CD14-positive monocyte (primary cell): ENCODE measurements at regions of chr16 and their contacts with region 1.

Region 1: DNA sequence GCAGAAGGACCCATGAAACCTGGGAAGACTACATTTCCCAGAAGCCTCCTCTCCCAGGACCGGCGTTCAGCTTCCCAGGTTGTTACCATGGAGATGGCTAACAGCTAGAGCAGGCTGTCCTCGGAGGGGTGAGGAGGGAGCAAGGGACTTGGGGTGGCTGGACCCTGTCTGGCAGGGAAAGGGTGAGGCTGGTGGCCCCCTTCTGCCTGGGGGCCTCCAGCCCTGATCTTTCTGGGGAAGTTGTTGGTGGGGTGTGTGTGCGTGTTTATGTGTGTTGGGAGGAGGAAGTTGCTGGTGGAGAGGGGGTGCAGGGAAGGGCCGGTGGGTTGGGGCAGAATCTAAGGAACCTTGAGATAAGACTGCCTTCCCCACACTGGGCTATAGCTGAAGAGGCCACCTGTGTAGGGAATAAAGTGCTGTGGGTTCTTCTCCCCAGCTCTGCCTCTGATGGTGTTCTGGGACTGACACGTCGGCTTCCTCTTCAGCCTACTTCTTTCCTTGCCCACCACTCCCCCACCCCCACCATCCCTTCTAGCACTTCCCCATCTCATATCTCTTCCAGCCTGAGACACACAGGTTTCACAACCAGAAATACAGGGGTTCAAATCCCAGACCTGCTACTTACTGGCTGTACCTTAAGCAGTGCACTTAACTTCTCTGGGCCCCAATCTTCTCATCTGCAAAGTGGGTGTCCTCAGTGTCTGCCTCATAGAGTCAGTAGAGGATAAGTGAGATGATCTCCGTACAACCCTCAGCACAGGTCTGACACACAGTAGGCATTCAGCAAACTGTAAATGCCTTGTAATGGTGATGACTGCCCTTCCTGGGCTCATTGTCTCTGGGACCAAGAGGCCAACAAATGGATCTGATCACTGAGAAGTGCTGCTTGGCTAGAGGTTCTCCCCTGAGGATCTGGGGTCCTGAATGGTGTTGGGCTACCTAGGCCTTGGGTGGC is at the start of gene DRC7:
- DNase-seq: peak; percentile 76 to 79 (median 76)
- H3K4me3 ChIP-seq: peak within 1 kb of the TSS; percentile 40 to 76 (median 49)
- H3K4me3 Mint-ChIP-seq: peak within 1 kb of the TSS; percentile 83 to 94
- H3K27ac ChIP-seq: peak within 1 kb of the TSS; percentile 73 to 85
- H3K27ac Mint-ChIP-seq: peak within 1 kb of the TSS; percentile 93 to 98 (median 97)
- H3K4me1 ChIP-seq: peaks cover 30 to 35% of the 10 kb centered on the region in 2 donors
- H3K4me1 Mint-ChIP-seq: peaks cover 32% of the 10 kb centered on the region
- H3K27me3 ChIP-seq: no peaks in the 10 kb centered on the region
- H3K27me3 Mint-ChIP-seq: peaks cover 1 to 2% (median 2%) of the 10 kb centered on the region in 3 donors
- CTCF ChIP-seq: no peak
- polyA plus RNA-seq, gene DRC7: 0.11 to 0.41 TPM in 2 of 3 donors, not detected in the other

Region 2: GRCh38 chr16:57648590-57649442 is 46.2 kb before region 1 on chr16:
- intact Hi-C with region 1: loop called (anchors 5 kb)
- DNase-seq: peak; percentile 82 to 86 (median 83)
- H3K4me3 ChIP-seq: no peak overlapping the region
- H3K4me3 Mint-ChIP-seq: no peak overlapping the region
- H3K27ac ChIP-seq: peak overlapping the region; percentile 48 to 58
- H3K27ac Mint-ChIP-seq: peak overlapping the region; percentile 26 to 93 (median 83)
- H3K4me1 ChIP-seq: peaks cover 24 to 25% of the 10 kb centered on the region in 2 donors
- H3K4me1 Mint-ChIP-seq: peaks cover 25% of the 10 kb centered on the region
- H3K27me3 ChIP-seq: peaks cover 2 to 34% of the 10 kb centered on the region in 2 donors
- H3K27me3 Mint-ChIP-seq: peaks cover 23 to 39% (median 32%) of the 10 kb centered on the region in 3 donors
- CTCF ChIP-seq: peak; percentile 100

Region 3: DNA sequence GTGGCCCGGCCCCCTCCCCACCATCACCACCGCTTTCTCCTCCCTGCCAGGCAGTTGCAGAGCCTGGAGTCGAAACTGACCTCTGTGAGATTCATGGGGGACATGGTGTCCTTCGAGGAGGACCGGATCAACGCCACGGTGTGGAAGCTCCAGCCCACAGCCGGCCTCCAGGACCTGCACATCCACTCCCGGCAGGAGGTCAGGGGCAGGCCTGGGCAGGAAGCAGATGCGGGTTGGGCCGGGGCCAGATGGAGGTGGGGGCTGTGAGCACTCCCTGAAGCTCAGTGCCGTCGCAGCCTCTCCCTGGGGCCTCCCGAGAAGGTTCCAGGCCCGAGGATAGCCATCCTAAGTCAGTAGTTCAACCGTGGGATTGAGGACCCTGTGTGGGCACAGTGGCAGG is 41.1 kb before region 1 on chr16:
- intact Hi-C with region 1: loop called (anchors 5 kb)
- DNase-seq: no peak
- H3K4me3 ChIP-seq: no peak overlapping the region
- H3K4me3 Mint-ChIP-seq: peak overlapping the region in 1 of 2 donors; percentile 42
- H3K27ac ChIP-seq: no peak overlapping the region
- H3K27ac Mint-ChIP-seq: no peak overlapping the region
- H3K4me1 ChIP-seq: peaks cover 4 to 5% of the 10 kb centered on the region in 2 donors
- H3K4me1 Mint-ChIP-seq: peaks cover 9% of the 10 kb centered on the region
- H3K27me3 ChIP-seq: peaks cover 0 to 8% of the 10 kb centered on the region in 2 donors
- H3K27me3 Mint-ChIP-seq: peaks cover 20 to 30% (median 24%) of the 10 kb centered on the region in 3 donors
- CTCF ChIP-seq: no peak

Region 4: DNA sequence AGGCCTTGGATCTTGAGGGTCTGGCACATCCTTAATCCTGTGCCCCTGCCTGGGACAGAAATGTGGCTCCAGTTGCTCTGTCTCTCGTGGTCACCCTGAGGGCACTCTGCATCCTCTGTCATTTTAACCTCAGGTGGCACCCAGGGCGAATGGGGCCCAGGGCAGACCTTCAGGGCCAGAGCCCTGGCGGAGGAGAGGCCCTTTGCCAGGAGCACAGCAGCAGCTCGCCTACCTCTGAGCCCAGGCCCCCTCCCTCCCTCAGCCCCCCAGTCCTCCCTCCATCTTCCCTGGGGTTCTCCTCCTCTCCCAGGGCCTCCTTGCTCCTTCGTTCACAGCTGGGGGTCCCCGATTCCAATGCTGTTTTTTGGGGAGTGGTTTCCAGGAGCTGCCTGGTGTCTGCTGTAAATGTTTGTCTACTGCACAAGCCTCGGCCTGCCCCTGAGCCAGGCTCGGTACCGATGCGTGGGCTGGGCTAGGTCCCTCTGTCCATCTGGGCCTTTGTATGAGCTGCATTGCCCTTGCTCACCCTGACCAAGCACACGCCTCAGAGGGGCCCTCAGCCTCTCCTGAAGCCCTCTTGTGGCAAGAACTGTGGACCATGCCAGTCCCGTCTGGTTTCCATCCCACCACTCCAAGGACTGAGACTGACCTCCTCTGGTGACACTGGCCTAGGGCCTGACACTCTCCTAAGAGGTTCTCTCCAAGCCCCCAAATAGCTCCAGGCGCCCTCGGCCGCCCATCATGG is 30.9 kb before region 1 on chr16:
- intact Hi-C with region 1: loop called in 1 of 2 experiments (anchors 5 kb)
- DNase-seq: no peak
- H3K4me3 ChIP-seq: no peak overlapping the region
- H3K4me3 Mint-ChIP-seq: no peak overlapping the region
- H3K27ac ChIP-seq: no peak overlapping the region
- H3K27ac Mint-ChIP-seq: peak overlapping the region in 6 of 7 donors; percentile 38 to 90 (median 70)
- H3K4me1 ChIP-seq: peaks cover 25 to 27% of the 10 kb centered on the region in 2 donors
- H3K4me1 Mint-ChIP-seq: peaks cover 38% of the 10 kb centered on the region
- H3K27me3 ChIP-seq: no peaks in the 10 kb centered on the region
- H3K27me3 Mint-ChIP-seq: peaks cover under 1 to 4% (median 3%) of the 10 kb centered on the region in 3 donors
- CTCF ChIP-seq: no peak

Region 5: GRCh38 chr16:57675741-57676584 is 19.0 kb before region 1 on chr16:
- intact Hi-C with region 1: no loop called
- DNase-seq: peak; percentile 55 to 78 (median 71)
- H3K4me3 ChIP-seq: no peak overlapping the region
- H3K4me3 Mint-ChIP-seq: peak overlapping the region in 1 of 2 donors; percentile 4
- H3K27ac ChIP-seq: no peak overlapping the region
- H3K27ac Mint-ChIP-seq: peak overlapping the region; percentile 10 to 71 (median 52)
- H3K4me1 ChIP-seq: peaks cover 31 to 49% of the 10 kb centered on the region in 2 donors
- H3K4me1 Mint-ChIP-seq: peaks cover 42% of the 10 kb centered on the region
- H3K27me3 ChIP-seq: no peaks in the 10 kb centered on the region
- H3K27me3 Mint-ChIP-seq: peaks cover 2 to 4% (median 4%) of the 10 kb centered on the region in 3 donors
- CTCF ChIP-seq: no peak

Region 6: DNA sequence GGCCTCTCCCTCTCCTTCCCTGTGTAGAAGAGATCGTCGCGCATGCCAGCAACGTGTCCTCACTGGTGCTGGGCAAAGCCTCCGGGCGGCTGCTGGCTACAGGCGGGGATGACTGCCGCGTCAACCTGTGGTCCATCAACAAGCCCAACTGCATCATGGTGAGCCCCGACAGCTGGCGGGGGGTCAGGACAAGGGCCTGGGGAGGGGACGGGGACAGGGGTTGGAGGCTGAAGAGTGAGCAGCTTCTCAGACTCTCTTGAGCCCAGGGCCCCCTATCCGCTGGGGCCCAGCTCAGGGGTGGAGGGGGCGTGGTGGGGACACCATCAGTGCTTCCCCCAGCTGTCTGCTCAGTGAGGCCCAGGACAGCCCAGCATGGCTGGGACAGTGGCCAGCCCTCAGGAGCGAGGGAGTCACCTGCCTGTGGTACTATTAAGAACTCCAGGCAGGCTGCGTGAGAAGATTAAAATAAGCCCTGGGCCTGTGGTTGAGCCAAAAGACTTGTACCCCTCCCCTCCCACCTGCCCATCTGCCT is 46.7 kb after region 1 on chr16:
- intact Hi-C with region 1: no loop called
- DNase-seq: no peak
- H3K4me3 ChIP-seq: no peak overlapping the region
- H3K4me3 Mint-ChIP-seq: no peak overlapping the region
- H3K27ac ChIP-seq: no peak overlapping the region
- H3K27ac Mint-ChIP-seq: no peak overlapping the region
- H3K4me1 ChIP-seq: peaks cover 3 to 4% of the 10 kb centered on the region in 2 donors
- H3K4me1 Mint-ChIP-seq: peaks cover 4% of the 10 kb centered on the region
- H3K27me3 ChIP-seq: no peaks in the 10 kb centered on the region
- H3K27me3 Mint-ChIP-seq: peaks cover 0 to 2% (median under 1%) of the 10 kb centered on the region in 3 donors
- CTCF ChIP-seq: no peak

Region 7: DNA sequence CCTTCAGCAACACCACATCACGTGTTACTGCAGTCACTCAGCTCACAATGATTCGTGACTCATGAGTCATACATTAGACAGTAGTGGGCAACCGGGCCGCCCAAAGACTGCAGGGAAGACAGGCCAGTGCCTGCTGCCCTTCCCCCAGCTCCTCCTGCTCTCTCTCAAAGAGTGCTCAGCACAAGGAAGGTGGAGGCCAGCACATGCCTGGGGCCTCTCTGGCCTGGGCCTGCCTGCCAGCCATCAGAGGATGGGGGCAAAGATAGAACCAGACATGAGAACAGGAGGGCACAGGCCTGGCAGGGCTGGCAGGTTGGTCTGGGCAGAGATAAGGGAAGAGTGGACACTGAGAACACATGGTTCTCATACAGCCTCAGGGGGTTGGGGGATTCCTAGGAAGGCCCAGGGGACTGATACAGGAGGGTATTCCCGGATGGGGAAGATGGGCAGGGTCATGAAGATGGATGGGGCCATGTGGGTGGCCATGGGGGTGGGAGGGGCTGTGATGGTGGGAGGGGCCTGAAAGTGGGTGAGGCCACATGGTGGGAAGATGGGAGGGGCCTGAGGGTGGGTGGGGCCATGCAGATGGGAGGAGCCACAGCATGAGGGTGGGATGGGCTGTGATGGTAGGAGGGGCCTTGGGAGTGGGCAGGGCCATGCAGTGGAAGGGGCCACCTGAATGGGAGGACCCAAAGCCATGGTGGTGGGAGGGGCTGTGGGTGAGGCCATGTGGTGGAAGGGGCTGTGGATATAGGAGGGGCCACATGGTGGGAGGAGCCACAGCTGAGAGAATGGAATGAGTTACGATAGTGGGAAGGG is 69.5 kb after region 1 on chr16:
- intact Hi-C with region 1: no loop called
- DNase-seq: peak; percentile 36 to 71 (median 43)
- H3K4me3 ChIP-seq: no peak overlapping the region
- H3K4me3 Mint-ChIP-seq: no peak overlapping the region
- H3K27ac ChIP-seq: no peak overlapping the region
- H3K27ac Mint-ChIP-seq: peak overlapping the region in 3 of 7 donors; percentile 25 to 77 (median 45)
- H3K4me1 ChIP-seq: no peaks in the 10 kb centered on the region
- H3K4me1 Mint-ChIP-seq: peaks cover 3% of the 10 kb centered on the region
- H3K27me3 ChIP-seq: no peaks in the 10 kb centered on the region
- H3K27me3 Mint-ChIP-seq: peaks cover 0 to 6% (median 2%) of the 10 kb centered on the region in 3 donors
- CTCF ChIP-seq: no peak